Activated CD8-positive, alpha-beta T cell treated with anti-CD3 and anti-CD28 coated beads for 36 hours (primary cell): ENCODE measurements at regions of chr9 and their contacts with region 1.

Region 1: GRCh38 chr9:105881654-105882349 is 187.5 kb downstream of the TMEM38B start:
- DNase-seq: peak; percentile 87
- ATAC-seq: peak; percentile 65
- H3K4me3 Mint-ChIP-seq: no peak overlapping the region
- H3K27ac Mint-ChIP-seq: no peak overlapping the region
- H3K4me1 Mint-ChIP-seq: peaks cover 15% of the 10 kb centered on the region
- H3K27me3 Mint-ChIP-seq: peaks cover 1% of the 10 kb centered on the region
- CTCF ChIP-seq: peak; percentile 78

Region 2: GRCh38 chr9:105608721-105609598 is 272.8 kb before region 1 on chr9:
- CTCF ChIA-PET with region 1: no interaction called
- POLR2A ChIA-PET with region 1: no interaction called
- intact Hi-C with region 1: loop called (anchors 5 kb)
- DNase-seq: no peak
- ATAC-seq: peak; percentile 58
- H3K4me3 Mint-ChIP-seq: no peak overlapping the region
- H3K27ac Mint-ChIP-seq: no peak overlapping the region
- H3K4me1 Mint-ChIP-seq: no peaks in the 10 kb centered on the region
- H3K27me3 Mint-ChIP-seq: no peaks in the 10 kb centered on the region
- CTCF ChIP-seq: peak; percentile 69

Region 3: DNA sequence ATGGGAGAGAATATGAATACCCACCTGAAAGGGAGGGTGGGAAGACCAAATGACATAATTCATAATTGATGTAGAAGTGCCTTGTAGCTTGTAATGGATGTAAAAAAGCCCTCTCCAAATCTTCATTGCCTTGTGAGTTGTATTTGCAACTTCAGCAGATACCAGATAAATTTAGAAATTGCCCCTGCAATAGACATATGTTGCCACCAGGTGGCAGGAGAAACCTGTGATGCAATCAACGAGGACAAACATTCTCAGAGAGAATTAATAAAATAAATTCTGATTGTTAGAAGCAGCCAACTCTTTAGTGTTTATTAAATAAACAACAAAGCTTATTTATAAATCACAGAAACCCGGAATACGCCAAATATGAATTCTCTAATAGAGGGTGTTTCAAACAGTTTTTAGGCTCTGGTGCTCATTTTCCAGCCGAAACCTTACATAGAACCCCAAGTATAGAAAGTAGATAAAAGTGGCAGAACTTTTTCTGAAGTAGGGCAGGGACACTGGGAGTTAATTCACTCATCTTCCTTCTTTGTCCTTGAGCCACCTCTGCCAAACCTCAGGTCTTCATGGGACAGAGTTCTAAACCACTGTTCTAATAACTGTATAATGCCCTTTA is 39.7 kb before region 1 on chr9:
- CTCF ChIA-PET with region 1: interaction called, 175 read pairs
- POLR2A ChIA-PET with region 1: interaction called, 3 read pairs
- intact Hi-C with region 1: loop called (anchors 1 kb)
- DNase-seq: peak; percentile 48
- ATAC-seq: no peak
- H3K4me3 Mint-ChIP-seq: no peak overlapping the region
- H3K27ac Mint-ChIP-seq: no peak overlapping the region
- H3K4me1 Mint-ChIP-seq: no peaks in the 10 kb centered on the region
- H3K27me3 Mint-ChIP-seq: no peaks in the 10 kb centered on the region
- CTCF ChIP-seq: peak; percentile 93

Region 4: GRCh38 chr9:105858006-105858690 is 23.7 kb before region 1 on chr9:
- CTCF ChIA-PET with region 1: interaction called, 34 read pairs
- POLR2A ChIA-PET with region 1: no interaction called
- intact Hi-C with region 1: no loop called
- DNase-seq: peak; percentile 13
- ATAC-seq: peak; percentile 74
- H3K4me3 Mint-ChIP-seq: no peak overlapping the region
- H3K27ac Mint-ChIP-seq: peak overlapping the region; percentile 70
- H3K4me1 Mint-ChIP-seq: peaks cover 22% of the 10 kb centered on the region
- H3K27me3 Mint-ChIP-seq: no peaks in the 10 kb centered on the region
- CTCF ChIP-seq: no peak

Region 5: DNA sequence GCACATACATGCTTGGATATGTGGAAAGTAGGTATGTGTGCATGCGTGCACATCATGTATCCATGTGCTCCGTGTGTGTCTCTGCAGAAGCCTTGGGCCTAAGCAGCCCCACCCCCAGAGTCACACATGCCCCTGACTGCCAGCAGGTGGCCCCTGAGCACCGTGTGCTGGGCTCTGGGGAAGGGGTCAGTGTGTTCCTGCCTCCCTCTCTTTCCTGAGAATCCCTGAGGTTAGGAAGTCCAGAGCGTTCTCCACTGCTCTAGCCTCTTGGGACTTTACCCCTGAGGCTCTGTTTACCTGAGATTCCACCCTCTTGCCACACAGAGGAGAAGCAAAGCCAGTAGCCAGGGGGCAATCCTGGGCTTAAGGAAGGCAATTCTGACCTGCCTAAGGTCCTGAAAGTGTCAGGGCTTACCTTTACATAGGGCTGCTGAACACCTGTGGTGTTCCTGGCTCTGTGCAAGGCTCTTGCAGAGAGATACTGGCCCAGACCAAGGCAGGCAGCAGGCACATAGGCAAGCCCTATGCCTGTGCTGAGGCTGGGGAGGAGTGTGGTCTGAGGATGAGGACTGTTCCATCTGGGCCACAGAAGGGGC is 19.8 kb after region 1 on chr9:
- CTCF ChIA-PET with region 1: interaction called, 14 read pairs
- POLR2A ChIA-PET with region 1: no interaction called
- intact Hi-C with region 1: no loop called
- DNase-seq: peak; percentile 8
- ATAC-seq: peak; percentile 42
- H3K4me3 Mint-ChIP-seq: no peak overlapping the region
- H3K27ac Mint-ChIP-seq: no peak overlapping the region
- H3K4me1 Mint-ChIP-seq: no peaks in the 10 kb centered on the region
- H3K27me3 Mint-ChIP-seq: no peaks in the 10 kb centered on the region
- CTCF ChIP-seq: peak; percentile 41